Tibial artery (tissue), 4 donors: ENCODE measurements at regions of chr3 and their contacts with region 1.

Region 1: GRCh38 chr3:39406368-39407258 is at the start of gene RPSA:
- DNase-seq: peak; percentile 93 to 96
- H3K4me3 ChIP-seq: peak within 1 kb of the TSS; percentile 70 to 72
- H3K27ac ChIP-seq: peak within 1 kb of the TSS; percentile 73 to 75
- H3K4me1 ChIP-seq: peaks cover 0 to 27% (median 16%) of the 10 kb centered on the region in 4 donors
- H3K27me3 ChIP-seq: no peaks in the 10 kb centered on the region
- CTCF ChIP-seq: peak; percentile 14 to 25

Region 2: GRCh38 chr3:39383045-39383880 is 23.4 kb before region 1 on chr3 and contains the start of gene SLC25A38:
- intact Hi-C with region 1: loop called (anchors 2 kb)
- DNase-seq: peak; percentile 81 to 88
- H3K4me3 ChIP-seq: peak within 1 kb of the TSS; percentile 80 to 82
- H3K27ac ChIP-seq: peak within 1 kb of the TSS; percentile 92 to 96
- H3K4me1 ChIP-seq: peaks cover 0 to 23% (median 12%) of the 10 kb centered on the region in 4 donors
- H3K27me3 ChIP-seq: no peaks in the 10 kb centered on the region
- CTCF ChIP-seq: peak in 1 of 2 experiments; percentile 24

Region 3: DNA sequence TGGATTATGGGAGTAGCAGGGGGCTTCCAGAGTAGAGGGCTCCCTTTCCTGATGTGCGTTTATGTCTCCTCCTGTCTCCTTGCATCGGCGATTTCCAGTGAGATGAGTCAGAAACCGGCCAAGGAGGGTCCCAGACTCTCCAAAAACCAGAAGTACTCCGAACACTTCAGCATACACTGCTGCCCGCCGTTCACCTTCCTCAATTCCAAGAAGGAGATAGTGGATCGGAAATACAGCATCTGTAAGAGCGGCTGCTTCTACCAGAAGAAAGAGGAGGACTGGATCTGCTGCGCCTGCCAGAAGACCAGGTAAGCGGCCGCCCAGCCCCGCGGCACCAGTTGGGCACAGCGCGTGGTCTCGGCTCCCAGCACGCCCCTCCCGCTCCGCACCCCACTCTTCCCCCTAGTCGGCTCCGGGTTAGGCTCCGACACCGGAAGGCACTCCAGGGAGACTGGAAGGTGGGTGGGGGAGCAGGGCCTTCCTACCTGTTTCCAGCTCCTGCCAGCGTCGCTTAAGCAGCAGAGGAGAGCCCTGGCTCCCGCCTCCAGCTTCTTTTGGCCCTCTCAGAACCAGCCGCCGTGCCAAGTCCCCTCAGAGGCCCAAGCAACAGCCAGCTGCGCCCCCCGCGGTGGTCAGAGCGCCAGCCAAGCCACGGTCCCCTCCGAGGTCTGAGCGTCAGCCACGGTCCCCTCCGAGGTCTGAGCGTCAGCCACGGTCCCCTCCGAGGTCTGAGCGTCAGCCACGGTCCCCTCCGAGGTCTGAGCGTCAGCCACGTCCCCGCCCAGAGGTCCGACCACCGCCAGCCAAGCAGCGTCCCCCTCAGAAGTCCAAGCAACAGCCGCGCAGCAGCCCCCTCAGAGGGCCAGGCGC is 95.6 kb after region 1 on chr3:
- intact Hi-C with region 1: no loop called
- DNase-seq: no peak
- H3K4me3 ChIP-seq: peak overlapping the region in 1 of 2 donors; percentile 9
- H3K27ac ChIP-seq: no peak overlapping the region
- H3K4me1 ChIP-seq: peaks cover 0 to 10% (median 3%) of the 10 kb centered on the region in 4 donors
- H3K27me3 ChIP-seq: peaks cover 0 to 28% of the 10 kb centered on the region in 2 donors
- CTCF ChIP-seq: no peak